HCT116 (cell line): ENCODE measurements at regions of chr11 and their contacts with region 1.

Region 1: DNA sequence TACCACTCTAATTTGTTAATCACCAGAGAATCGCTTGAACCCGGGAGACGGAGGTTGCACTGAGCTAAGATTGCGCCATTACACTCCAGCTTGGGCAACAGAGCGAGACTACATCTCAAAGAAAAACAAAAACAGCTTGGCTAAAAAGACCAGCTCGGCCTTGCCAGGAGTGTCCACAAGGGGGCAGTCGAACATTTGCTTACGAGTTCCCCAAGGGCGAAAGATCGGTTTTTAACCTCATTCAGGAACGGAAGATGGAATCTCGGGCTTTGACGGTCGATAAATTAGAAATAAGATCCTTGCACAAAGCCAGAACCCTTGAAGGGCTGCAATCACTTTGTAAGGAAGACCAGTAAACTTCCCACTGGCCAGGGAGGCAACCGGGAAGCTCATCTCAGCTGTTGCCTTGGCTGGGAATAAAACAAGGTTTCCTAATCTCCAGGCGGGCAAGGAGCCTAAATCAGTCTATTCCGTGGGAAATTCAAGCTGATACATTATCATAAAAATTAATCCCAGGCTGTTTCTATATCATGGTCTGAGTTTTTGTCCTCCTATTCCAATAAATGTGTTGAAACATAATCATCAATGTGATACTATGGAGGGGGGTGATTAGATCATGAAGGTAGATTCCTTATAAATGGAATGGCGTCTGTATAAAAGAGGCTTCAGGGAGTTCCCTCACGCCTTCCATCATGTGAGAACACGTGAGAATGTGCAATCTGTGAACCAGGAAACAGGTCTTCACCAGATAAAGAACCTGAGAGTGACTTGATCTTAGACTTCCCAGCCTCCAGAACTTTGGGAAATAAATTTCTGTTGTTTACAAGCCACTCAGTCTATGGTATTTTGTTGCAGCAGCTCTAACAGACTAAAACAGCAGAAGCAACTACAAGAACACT is 14.9 kb upstream of the SLC29A2 start:
- DNase-seq: peak; percentile 84
- ATAC-seq: peak; percentile 71
- H3K4me3 ChIP-seq: peak overlapping the region; percentile 27 to 32
- H3K27ac ChIP-seq: 0 out of 2 replicates have a peak overlapping the region, but pooled peaks have one; percentile 3
- H3K4me1 ChIP-seq: peaks cover 16 to 32% of the 10 kb centered on the region in 2 experiments; a peak in 3 of 4 replicates
- H3K27me3 ChIP-seq: no peaks in the 10 kb centered on the region
- CTCF ChIP-seq: peak; percentile 79 to 96 (median 94)
- POLR2A ChIP-seq: no peak
- RAD21 ChIP-seq: peak; percentile 71

Region 2: DNA sequence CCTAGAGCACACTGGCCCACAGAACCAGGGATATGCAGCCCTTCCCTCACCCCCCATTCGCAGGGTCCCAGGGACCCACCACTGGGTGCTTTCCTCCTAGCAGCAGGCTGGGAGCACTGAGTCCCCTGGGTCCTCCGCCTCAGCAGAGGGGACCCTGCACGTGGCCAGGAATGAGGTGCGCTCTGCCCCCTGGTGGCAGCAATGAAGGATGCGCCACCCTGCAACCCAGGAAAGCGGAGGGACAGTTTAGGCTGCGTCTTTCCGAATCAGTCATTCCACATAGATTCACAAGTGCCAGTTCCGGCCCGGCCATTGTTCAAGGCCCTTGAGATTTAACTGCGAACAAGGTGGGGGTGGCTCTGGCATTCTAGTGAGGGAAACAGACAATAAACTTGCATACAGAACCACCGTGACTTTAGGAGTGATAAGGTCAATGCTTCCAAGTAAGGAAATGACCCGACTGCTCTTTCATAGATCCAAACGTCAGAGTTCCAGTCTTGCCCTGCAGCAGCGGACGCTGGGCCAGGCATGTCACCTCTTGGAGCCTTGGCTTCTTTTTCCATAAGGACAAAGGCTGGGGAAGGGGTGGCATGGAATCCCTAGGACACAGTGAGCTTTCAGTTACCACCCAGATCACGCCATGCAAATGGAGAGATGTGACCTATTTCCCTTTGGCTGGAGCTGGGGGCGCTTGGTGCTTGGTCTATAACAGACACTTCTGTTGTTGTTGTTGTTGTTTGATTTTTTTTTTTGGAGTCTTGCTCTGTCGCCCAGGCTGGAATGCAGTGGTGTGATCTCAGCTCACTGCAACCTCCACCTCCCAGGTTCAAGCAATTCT is 57.9 kb before region 1 on chr11:
- CTCF ChIA-PET with region 1: no interaction called
- POLR2A ChIA-PET with region 1: no interaction called
- RAD21 ChIA-PET with region 1: no interaction called
- intact Hi-C with region 1: no loop called
- DNase-seq: peak; percentile 54
- ATAC-seq: peak; percentile 86
- H3K4me3 ChIP-seq: peak overlapping the region in 1 of 2 experiments; percentile 21; a peak in 1 of 4 replicates
- H3K27ac ChIP-seq: peak overlapping the region; percentile 41
- H3K4me1 ChIP-seq: peaks cover 17 to 57% of the 10 kb centered on the region in 2 experiments
- H3K27me3 ChIP-seq: no peaks in the 10 kb centered on the region
- CTCF ChIP-seq: peak in 2 of 3 experiments; percentile 92 to 97; a peak in 4 of 6 replicates
- POLR2A ChIP-seq: no peak
- RAD21 ChIP-seq: no peak

Region 3: DNA sequence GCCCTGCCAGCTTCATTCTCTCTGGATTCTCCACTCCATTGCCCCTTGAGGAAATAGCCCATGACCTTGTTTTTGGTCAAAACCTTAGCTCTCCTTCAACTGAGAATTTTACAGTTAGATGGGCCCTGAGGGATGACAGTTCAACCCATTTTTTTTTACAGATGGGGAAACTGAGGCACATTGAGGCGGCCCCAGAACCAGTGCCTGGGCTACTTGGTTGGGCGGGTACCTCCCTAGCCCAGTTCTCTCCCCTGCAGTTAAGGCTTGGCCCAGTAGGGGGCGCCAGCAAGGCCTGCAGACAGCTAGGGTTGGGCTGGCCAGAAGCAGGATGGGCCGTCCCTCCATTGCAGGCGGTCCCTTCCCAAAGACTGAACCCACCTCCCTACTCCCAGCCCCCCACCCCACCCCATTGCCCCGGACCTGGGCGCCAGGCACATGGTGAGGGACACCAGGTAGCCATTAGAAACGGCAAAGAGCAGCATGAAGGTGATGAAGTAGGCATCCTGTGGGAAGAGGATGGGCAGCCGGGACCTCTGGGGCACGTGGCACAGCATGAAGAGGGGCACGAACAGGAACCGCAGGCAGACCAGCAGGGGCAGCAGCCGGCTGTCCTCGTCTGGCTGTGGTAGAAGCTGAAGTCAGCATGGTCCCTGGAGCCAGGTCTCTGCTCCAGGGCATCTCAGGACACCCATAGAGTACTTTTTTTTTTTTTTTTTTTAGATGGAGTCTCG is 22.4 kb before region 1 on chr11:
- CTCF ChIA-PET with region 1: interaction called, 23 read pairs
- POLR2A ChIA-PET with region 1: no interaction called
- RAD21 ChIA-PET with region 1: no interaction called
- intact Hi-C with region 1: no loop called
- DNase-seq: no peak
- ATAC-seq: peak; percentile 75
- H3K4me3 ChIP-seq: no peak overlapping the region
- H3K27ac ChIP-seq: no peak overlapping the region
- H3K4me1 ChIP-seq: peaks cover 0 to 7% of the 10 kb centered on the region in 2 experiments; a peak in 1 of 4 replicates
- H3K27me3 ChIP-seq: no peaks in the 10 kb centered on the region
- CTCF ChIP-seq: peak in 2 of 3 experiments; percentile 91 to 95; a peak in 5 of 6 replicates
- POLR2A ChIP-seq: no peak
- RAD21 ChIP-seq: no peak

Region 4: DNA sequence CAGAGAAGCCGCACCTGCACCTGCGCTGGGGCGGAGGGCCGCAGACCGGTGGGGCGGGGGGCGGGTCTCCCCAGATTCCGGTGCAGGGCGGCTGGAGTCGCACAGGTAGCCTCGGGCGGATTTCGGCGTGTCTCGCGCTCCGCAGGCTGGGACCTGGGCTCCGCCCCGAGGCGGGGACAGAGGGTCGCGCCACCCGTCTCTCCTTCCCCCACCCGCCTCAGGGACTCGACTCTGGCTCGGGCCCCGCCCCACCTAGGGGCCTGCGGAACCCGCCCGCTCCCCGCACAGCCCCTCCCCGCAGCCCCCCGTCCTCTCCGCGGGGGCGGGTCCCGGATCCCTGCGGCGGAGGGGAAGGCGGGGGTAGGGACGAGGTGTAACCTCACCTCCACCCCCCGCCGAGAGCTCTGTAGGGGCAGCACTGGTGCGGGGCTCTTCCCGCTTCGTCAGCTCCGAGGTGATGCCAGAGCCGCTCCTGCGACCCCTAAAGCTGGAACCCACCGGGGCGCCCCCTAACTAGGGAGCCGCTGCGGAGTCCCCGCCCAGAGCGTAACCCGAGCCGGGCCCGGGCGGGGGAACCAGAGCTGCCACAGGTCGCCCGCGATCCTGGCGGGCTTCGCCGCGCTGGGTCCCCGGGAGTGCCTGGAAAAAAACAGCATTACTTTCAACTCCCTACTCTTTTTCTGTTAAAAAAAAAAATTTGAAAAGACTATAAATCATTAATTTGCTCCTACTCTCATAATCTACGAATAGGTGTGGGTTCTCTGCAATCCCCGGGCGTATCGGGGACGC is 14.6 kb before region 1 on chr11 and contains the start of gene SLC29A2:
- CTCF ChIA-PET with region 1: interaction called, 25 read pairs
- POLR2A ChIA-PET with region 1: interaction called, 5 read pairs
- RAD21 ChIA-PET with region 1: interaction called, 3 to 4 read pairs
- intact Hi-C with region 1: no loop called
- DNase-seq: peak; percentile 82
- ATAC-seq: peak; percentile 86
- H3K4me3 ChIP-seq: peak within 1 kb of the TSS; percentile 76 to 88
- H3K27ac ChIP-seq: peak within 1 kb of the TSS; percentile 99
- H3K4me1 ChIP-seq: peaks cover 19 to 33% of the 10 kb centered on the region in 2 experiments
- H3K27me3 ChIP-seq: no peaks in the 10 kb centered on the region
- CTCF ChIP-seq: no peak
- POLR2A ChIP-seq: peak; percentile 40
- RAD21 ChIP-seq: no peak
- total RNA-seq, gene SLC29A2: 39.7 TPM

Region 5: DNA sequence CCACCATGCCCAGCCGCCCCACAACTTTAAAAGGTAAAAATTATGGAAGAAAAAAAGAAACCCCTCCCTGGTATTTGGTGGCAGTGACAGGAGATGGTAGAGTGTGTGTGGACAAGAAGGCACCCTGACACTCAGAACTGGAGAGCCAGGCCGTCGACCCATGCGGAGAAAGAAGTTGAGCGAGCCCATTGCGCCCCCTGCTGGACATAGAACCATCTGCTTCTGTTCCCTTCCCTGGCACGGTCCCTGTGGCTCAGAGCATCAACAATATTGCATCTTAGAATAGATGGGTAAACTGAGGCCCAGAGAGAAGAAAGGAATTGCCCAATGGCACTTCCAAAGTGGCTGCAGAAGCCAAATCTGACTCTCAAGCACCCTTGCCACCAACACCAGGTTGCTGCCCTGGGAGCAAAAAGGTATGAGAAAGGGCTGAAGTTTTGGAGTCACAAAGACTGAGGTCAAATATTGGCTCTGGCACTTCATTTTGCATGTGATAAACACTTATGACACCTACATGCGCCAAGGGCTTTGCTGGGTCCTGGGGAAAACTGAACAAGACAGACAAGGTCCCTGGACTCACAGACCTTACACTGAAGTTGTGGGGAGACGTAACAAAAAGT is 43.7 kb after region 1 on chr11:
- CTCF ChIA-PET with region 1: interaction called, 14 read pairs
- POLR2A ChIA-PET with region 1: interaction called, 4 read pairs
- RAD21 ChIA-PET with region 1: no interaction called
- intact Hi-C with region 1: no loop called
- DNase-seq: peak; percentile 44
- ATAC-seq: peak; percentile 96
- H3K4me3 ChIP-seq: no peak overlapping the region
- H3K27ac ChIP-seq: no peak overlapping the region
- H3K4me1 ChIP-seq: no peaks in the 10 kb centered on the region; a peak in 1 of 4 replicates
- H3K27me3 ChIP-seq: no peaks in the 10 kb centered on the region
- CTCF ChIP-seq: peak; percentile 89 to 98 (median 95)
- POLR2A ChIP-seq: no peak
- RAD21 ChIP-seq: peak; percentile 91

Region 6: DNA sequence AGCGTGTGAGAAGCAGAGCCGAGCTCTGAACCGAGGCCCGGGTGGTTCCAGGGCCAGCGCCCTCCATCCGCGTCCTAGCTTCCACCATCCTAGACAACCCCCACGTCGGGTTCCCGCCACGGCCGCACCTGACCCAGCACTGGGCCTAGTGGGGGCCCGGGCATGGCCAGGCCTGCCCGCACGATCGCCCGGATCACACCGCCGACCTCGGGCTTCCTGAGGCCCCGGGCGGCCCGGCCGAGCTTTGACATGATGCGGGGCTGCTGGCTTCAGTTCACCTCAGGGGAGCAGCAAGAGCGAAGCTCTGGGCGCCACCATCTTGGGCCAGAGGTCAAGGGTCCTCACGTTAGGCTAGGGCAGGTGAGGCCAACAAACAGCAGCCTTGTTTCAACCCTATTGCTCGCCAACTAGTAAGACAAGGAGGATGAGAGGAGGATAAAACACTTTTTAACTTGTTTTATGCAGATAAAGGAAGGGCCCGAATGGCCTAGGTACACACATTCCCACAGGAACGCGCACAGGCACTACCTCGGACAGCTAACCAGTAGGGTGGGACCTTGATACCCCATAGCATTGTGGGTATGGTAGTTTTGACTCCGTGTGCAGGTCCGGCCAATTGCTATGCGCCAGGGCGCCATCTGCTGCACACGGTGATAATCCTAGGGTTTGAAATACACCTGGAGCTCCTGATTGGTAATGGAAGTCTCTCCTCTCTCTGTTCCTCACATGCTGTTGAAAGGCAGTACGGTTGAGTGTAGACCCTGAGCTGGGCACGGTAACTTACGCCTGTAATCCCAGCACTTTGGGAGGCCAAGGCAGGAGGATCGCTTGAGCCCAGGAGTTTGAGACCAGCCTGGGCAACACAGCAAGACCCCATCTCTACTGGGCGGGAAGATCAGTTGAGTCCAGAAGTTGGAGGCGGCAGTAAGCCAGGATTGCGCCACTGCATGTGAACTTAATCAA is 52.4 kb after region 1 on chr11 and contains the start of gene MRPL11:
- CTCF ChIA-PET with region 1: interaction called, 11 read pairs
- POLR2A ChIA-PET with region 1: no interaction called
- RAD21 ChIA-PET with region 1: no interaction called
- intact Hi-C with region 1: no loop called
- DNase-seq: peak; percentile 91
- ATAC-seq: peak; percentile 93
- H3K4me3 ChIP-seq: peak within 1 kb of the TSS; percentile 68 to 96
- H3K27ac ChIP-seq: peak within 1 kb of the TSS; percentile 85
- H3K4me1 ChIP-seq: peaks cover 4 to 23% of the 10 kb centered on the region in 2 experiments; a peak in 3 of 4 replicates
- H3K27me3 ChIP-seq: no peaks in the 10 kb centered on the region
- CTCF ChIP-seq: peak; percentile 54 to 60 (median 60); a peak in 5 of 6 replicates
- POLR2A ChIP-seq: peak; percentile 30
- RAD21 ChIP-seq: peak; percentile 49
- total RNA-seq, gene MRPL11: 126 TPM